MCF 10A (cell line): ENCODE measurements at regions of chr14 and their contacts with region 1.

Region 1: GRCh38 chr14:75050852-75051554 is at the start of gene MLH3:
- DNase-seq: peak; percentile 84
- H3K4me3 Mint-ChIP-seq: peak within 1 kb of the TSS; percentile 83
- H3K27ac Mint-ChIP-seq: peak within 1 kb of the TSS; percentile 95
- H3K4me1 Mint-ChIP-seq: peaks cover 36% of the 10 kb centered on the region
- H3K27me3 Mint-ChIP-seq: no peaks in the 10 kb centered on the region
- CTCF ChIP-seq: no peak
- total RNA-seq, gene MLH3: 28.2 and 29.9 TPM in 2 replicates

Region 2: GRCh38 chr14:75063407-75064213 is 12.6 kb after region 1 on chr14 and contains the start of gene ACYP1:
- CTCF ChIA-PET with region 1: interaction called, 4 read pairs
- POLR2A ChIA-PET with region 1: interaction called, 49 read pairs
- intact Hi-C with region 1: no loop called
- DNase-seq: peak; percentile 90
- H3K4me3 Mint-ChIP-seq: peak within 1 kb of the TSS; percentile 100
- H3K27ac Mint-ChIP-seq: peak within 1 kb of the TSS; percentile 97
- H3K4me1 Mint-ChIP-seq: peaks cover 4% of the 10 kb centered on the region
- H3K27me3 Mint-ChIP-seq: no peaks in the 10 kb centered on the region
- CTCF ChIP-seq: no peak
- total RNA-seq, gene ACYP1: 11.7 and 19.9 TPM in 2 replicates

Region 3: GRCh38 chr14:75069045-75069810 is 18.2 kb after region 1 on chr14 and contains the start of gene ZC2HC1C:
- CTCF ChIA-PET with region 1: no interaction called
- POLR2A ChIA-PET with region 1: interaction called, 49 read pairs
- intact Hi-C with region 1: no loop called
- DNase-seq: peak; percentile 90
- H3K4me3 Mint-ChIP-seq: no peak within 1 kb of the TSS
- H3K27ac Mint-ChIP-seq: no peak within 1 kb of the TSS
- H3K4me1 Mint-ChIP-seq: peaks cover 6% of the 10 kb centered on the region
- H3K27me3 Mint-ChIP-seq: no peaks in the 10 kb centered on the region
- CTCF ChIP-seq: no peak
- total RNA-seq, gene ZC2HC1C: 1.3 and 2.2 TPM in 2 replicates